ENCODE measurements at regions of chr4 and their contacts with region 1.

Region 1: GRCh38 chr4:173257732-173258717 is 76.1 kb downstream of the HMGB2 start:
- DNase-seq: peak; percentile 39 to 96 (median 76)

Region 2: DNA sequence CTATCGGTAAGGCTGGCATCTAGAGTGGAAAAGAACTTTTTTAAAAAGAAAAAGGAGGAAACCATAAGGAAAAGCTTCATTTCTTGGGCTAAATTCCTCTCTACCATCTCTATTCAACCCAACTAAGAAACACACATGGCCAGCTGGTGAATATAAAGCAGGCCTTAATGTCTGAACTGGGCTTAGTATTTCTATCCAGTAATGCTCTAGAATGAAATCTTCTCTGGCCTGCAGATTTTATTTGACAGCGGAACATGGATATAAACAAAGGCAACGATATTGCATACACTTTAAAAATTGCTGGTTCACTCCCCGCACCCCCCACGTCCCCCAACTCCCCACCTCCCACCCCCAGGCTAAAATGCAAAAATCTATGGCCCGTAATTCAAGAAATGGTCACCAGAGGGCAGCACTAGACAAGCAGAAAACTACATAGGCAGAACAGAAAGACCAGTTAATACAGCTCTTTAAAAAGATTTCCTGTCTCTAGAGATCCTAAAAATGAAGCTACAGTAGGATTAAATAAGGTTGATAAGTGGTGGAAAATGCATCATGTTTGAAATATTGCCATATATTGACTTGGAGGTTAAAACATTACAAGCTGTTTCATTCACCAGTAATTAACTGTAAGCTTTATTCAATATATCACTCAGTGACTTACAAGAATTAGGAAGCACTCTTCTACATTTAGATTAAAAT is 244.6 kb before region 1 on chr4:
- intact Hi-C with region 1: loop called (anchors 1 kb)
- DNase-seq: peak in 4 of 10 donors; percentile 29 to 41 (median 36)

Region 3: GRCh38 chr4:173025131-173025530 is 232.9 kb before region 1 on chr4:
- intact Hi-C with region 1: loop called (anchors 1 kb)
- DNase-seq: peak in 3 of 10 donors; percentile 20 to 27 (median 27)

Region 4: GRCh38 chr4:173168396-173169177 is 89.4 kb before region 1 on chr4 and contains the start of gene GALNT7:
- intact Hi-C with region 1: loop called (anchors 10 kb)
- DNase-seq: peak; percentile 32 to 93 (median 62)

Measured in posterior cingulate gyrus (tissue), 11 donors.